WTC11 (cell line): ENCODE measurements at regions of chr2 and their contacts with region 1.

Region 1: DNA sequence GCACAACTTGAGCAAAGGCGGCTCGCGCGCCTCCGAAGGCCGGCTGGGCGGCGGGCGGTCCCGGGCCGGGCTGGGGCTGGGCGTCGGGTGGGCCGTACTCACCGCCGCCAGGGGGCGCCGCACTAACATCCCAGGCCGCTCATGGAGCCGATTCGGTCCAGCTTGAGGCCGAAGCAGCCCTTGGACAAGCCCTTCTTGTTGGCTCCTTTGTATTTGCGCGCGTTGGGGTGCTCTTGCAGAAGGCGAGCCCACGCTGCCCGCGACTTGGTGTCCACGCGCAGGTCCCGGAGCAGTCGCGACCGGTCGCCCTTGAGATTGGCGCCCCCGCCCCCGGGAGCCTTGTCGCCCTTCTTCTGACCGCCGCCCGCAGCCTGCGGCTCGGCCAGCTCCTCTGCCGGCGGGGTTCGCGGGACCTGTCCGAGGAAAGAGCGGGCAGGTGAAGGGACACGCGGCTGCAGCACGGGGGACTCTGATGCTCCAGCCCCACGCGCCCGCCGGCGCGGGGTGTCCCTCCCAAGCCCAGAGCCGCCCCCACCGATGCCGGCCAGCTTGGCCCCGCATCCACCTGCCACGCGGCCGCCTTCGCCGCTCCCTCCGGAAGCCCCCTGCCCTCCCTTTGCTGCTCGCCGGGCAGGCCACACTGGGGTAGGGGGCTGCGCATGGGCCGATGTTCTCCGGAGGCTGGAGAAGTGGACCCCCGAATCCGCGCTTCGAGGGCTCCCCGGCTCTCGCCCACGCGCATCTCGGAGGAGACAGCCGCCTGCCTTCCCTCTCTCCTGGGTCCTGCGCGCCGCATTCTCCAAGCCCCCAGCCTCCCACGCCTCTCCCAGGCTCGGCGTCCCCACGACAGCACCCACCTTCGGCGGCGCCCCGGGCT is 655 bp downstream of the NPPC start:
- DNase-seq: peak; percentile 88
- ATAC-seq: peak; percentile 41
- H3K4me3 Mint-ChIP-seq: peak overlapping the region; percentile 74
- H3K27ac Mint-ChIP-seq: no peak overlapping the region
- H3K4me1 Mint-ChIP-seq: peaks cover 15% of the 10 kb centered on the region
- H3K27me3 Mint-ChIP-seq: peaks cover 58% of the 10 kb centered on the region
- CTCF ChIP-seq: peak; percentile 95

Region 2: DNA sequence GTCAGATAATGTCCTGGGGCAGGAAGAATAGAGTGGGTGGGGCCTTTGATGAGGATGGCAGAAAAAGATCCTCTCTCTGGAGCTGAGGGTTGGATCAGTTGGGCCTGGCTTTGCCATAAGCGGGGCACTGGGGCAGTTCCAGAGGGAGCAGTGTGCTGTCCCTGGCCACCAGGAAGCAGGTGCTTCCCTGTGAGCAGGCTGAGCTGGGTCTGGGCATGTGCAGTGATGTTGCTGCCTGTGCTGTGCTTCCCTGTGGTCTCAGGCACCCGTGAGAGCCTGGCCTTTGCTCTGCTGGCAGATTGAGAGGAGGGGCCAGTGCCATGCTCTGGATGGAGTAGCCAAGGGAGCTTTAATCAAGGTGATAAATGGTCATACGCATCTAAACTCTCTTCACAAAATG is 15.3 kb after region 1 on chr2:
- CTCF ChIA-PET with region 1: interaction called, 27 read pairs
- POLR2A ChIA-PET with region 1: no interaction called
- DNase-seq: no peak
- ATAC-seq: peak; percentile 46; the same call in 1 of the 2 replicates
- H3K4me3 Mint-ChIP-seq: no peak overlapping the region
- H3K27ac Mint-ChIP-seq: no peak overlapping the region
- H3K4me1 Mint-ChIP-seq: no peaks in the 10 kb centered on the region
- H3K27me3 Mint-ChIP-seq: no peaks in the 10 kb centered on the region
- CTCF ChIP-seq: no peak

Region 3: GRCh38 chr2:232142049-232142448 is 216.5 kb after region 1 on chr2:
- CTCF ChIA-PET with region 1: interaction called, 80 read pairs
- POLR2A ChIA-PET with region 1: no interaction called
- DNase-seq: peak; percentile 44
- ATAC-seq: peak; percentile 93
- H3K4me3 Mint-ChIP-seq: no peak overlapping the region
- H3K27ac Mint-ChIP-seq: no peak overlapping the region
- H3K4me1 Mint-ChIP-seq: no peaks in the 10 kb centered on the region
- H3K27me3 Mint-ChIP-seq: no peaks in the 10 kb centered on the region
- CTCF ChIP-seq: peak; percentile 62

Region 4: DNA sequence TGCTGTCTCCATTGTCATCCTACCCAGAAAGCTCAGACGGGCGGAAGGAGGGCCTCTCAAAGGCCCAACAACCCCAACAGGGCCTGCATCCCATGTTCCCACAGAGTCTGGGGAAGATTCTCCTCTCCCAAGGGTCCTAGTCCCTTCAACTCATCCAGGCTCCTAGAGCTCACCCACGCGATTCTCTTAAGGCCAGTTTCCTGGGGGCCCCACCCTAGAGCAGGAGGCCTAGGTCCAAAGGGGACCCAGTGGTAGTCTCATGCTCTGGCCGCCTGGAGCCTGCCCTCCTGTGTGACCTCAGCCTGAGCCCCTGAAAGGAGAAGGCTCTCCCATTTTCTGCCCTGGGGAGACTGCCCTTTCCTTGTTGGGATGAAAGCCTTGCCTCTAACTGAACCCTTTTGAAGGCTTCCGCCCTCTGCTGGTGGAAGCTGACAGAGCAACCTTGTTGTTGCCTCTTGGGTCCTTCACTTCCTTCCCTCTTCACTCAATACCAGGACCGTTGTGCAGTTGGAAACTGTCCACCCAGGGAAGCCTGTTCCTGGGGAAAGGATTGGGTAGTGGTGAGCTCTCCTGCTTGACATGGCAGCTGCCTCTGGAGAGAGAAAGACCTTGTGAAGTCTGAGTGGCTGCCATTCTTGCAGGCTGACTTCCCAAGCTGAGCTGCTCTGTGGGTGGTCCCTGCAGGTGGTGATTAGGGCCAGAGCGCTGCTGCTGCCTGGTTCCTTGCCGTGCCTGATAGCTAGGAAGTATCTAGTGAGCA is 367.0 kb after region 1 on chr2:
- CTCF ChIA-PET with region 1: interaction called, 15 read pairs
- POLR2A ChIA-PET with region 1: no interaction called
- DNase-seq: peak; percentile 88
- ATAC-seq: peak; percentile 91
- H3K4me3 Mint-ChIP-seq: no peak overlapping the region
- H3K27ac Mint-ChIP-seq: peak overlapping the region; percentile 78
- H3K4me1 Mint-ChIP-seq: peaks cover 11% of the 10 kb centered on the region
- H3K27me3 Mint-ChIP-seq: no peaks in the 10 kb centered on the region
- CTCF ChIP-seq: peak; percentile 81

Region 5: GRCh38 chr2:232574674-232575403 is 649.3 kb after region 1 on chr2:
- CTCF ChIA-PET with region 1: no interaction called
- POLR2A ChIA-PET with region 1: no interaction called
- DNase-seq: no peak
- ATAC-seq: no peak
- H3K4me3 Mint-ChIP-seq: no peak overlapping the region
- H3K27ac Mint-ChIP-seq: no peak overlapping the region
- H3K4me1 Mint-ChIP-seq: no peaks in the 10 kb centered on the region
- H3K27me3 Mint-ChIP-seq: no peaks in the 10 kb centered on the region
- CTCF ChIP-seq: no peak

Region 6: DNA sequence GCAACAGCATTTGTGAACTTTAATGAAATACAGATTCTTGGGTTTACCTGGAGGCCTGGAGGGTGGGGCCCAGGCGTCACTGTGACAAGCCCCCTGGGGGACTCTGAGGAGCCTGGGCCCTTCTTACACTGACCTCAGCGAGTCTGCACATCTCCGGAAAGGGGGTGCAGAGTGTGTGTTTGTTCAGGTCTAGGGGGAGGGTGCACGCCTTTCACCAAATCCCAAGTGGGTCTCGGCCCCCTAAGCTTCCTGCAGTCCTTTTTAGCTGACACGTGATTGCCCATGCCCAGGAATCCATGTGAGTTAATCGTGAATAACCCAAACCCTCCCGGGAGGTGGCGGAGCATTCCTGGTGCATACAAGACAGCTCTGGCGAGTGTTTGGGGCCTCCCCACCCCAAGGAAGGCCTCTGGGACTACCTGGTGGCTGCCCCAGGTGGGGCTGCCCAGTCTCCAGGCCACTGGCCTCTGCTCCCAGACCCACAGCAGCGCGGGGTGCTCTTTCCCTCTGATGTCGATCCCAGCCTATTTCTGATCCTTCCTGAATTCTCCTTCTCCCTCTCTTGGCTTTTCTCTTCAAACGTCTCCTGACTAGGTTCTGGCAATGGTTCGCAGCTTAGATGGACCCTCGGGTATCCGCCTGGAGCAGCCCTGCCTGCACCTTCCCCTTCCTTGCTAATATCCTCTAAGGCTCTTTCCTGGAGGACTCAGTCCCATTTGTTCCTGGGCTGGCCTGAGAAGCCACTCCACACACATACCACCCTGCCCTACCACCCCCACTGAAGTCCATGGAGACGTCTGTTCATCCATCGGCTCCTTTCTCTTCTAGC is 1077.5 kb after region 1 on chr2:
- CTCF ChIA-PET with region 1: no interaction called
- POLR2A ChIA-PET with region 1: interaction called, 13 read pairs
- DNase-seq: no peak
- ATAC-seq: no peak
- H3K4me3 Mint-ChIP-seq: no peak overlapping the region
- H3K27ac Mint-ChIP-seq: no peak overlapping the region
- H3K4me1 Mint-ChIP-seq: no peaks in the 10 kb centered on the region
- H3K27me3 Mint-ChIP-seq: peaks cover 2% of the 10 kb centered on the region; the same call in 1 of the 2 replicates
- CTCF ChIP-seq: no peak